WTC11 (cell line): ENCODE measurements at regions of chr19 and their contacts with region 1.

Region 1: DNA sequence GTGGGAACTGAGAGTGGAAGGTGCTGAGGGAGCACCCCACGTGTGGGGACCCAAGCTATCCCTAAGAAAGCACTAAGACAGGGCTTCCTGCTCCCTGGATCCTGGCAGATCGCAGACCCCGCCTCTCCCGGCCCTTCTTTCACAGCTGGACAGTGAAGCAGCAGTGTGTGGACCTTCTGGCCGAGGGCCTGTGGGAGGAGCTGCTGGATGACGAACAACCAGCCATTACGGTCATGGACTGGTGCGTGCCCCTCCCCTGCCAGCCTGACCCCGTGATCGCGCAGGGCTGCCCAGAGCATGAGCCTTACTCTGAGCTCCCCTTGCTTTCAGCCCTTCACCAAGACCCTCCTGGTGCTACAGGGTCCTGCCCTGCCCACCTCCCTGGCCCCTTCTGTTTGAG is 2.3 kb downstream of the NCCRP1 start:
- DNase-seq: peak; percentile 42
- ATAC-seq: no peak
- H3K4me3 Mint-ChIP-seq: no peak overlapping the region
- H3K27ac Mint-ChIP-seq: no peak overlapping the region
- H3K4me1 Mint-ChIP-seq: peaks cover 22% of the 10 kb centered on the region
- H3K27me3 Mint-ChIP-seq: peaks cover 73% of the 10 kb centered on the region
- CTCF ChIP-seq: no peak

Region 2: GRCh38 chr19:39187559-39187957 is 11.5 kb before region 1 on chr19:
- CTCF ChIA-PET with region 1: interaction called, 23 read pairs
- POLR2A ChIA-PET with region 1: no interaction called
- DNase-seq: no peak
- ATAC-seq: peak; percentile 44
- H3K4me3 Mint-ChIP-seq: no peak overlapping the region
- H3K27ac Mint-ChIP-seq: 0 out of 2 replicates have a peak overlapping the region, but pooled peaks have one; percentile 50
- H3K4me1 Mint-ChIP-seq: no peaks in the 10 kb centered on the region
- H3K27me3 Mint-ChIP-seq: peaks cover 2% of the 10 kb centered on the region; the same call in 1 of the 2 replicates
- CTCF ChIP-seq: no peak; the same call in 1 of the 2 replicates

Region 3: GRCh38 chr19:39212375-39212742 is 13.3 kb after region 1 on chr19:
- CTCF ChIA-PET with region 1: interaction called, 11 read pairs
- POLR2A ChIA-PET with region 1: no interaction called
- DNase-seq: peak; percentile 81
- ATAC-seq: peak; percentile 96
- H3K4me3 Mint-ChIP-seq: no peak overlapping the region
- H3K27ac Mint-ChIP-seq: no peak overlapping the region
- H3K4me1 Mint-ChIP-seq: no peaks in the 10 kb centered on the region
- H3K27me3 Mint-ChIP-seq: peaks cover 11% of the 10 kb centered on the region
- CTCF ChIP-seq: peak; percentile 18; the same call in 1 of the 2 replicates